ENCODE measurements at regions of chr2 and their contacts with region 1.

Region 1: GRCh38 chr2:62456721-62457539 is 49.1 kb downstream of the TMEM17 start:
- DNase-seq: peak; percentile 60 to 96 (median 78)

Region 2: DNA sequence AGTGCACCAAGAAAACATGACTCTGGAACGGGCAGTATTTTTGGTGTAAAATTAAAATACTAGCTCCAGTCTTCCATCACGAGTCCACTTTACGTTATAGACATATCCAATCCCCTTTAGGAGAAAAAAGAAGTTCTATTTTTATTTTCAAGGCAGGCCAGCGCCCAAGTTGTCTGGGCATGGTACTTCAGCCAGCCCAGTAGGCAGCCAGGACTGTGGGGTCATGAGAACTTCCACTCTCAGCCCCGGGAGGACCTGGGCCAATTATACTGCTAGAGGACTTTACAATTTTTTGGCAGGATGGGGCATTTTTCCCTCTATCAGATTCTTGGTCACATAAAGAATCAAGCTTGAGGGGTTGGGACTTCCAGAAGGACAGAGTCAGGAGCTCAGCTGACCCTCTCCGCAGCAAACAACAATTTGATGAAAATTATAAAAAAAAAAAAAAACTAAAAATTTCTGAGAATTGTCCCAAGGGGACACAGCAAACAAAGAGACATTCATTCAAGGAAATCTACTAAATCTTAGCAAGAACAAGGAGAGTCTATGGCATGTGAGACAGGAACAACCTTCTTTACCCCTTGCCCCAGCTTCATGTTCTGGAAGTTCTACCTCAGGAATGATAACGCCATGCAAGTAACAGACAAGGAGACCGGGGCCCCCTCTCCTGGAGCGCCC is 298.3 kb before region 1 on chr2:
- intact Hi-C with region 1: no loop called
- DNase-seq: no peak

Region 3: GRCh38 chr2:62505750-62506420 is 49.0 kb after region 1 on chr2 and contains the start of gene TMEM17:
- intact Hi-C with region 1: loop called (anchors 5 kb)
- DNase-seq: peak; percentile 85 to 98 (median 89)

Region 4: GRCh38 chr2:62540408-62541168 is 83.7 kb after region 1 on chr2:
- intact Hi-C with region 1: no loop called
- DNase-seq: no peak

Region 5: GRCh38 chr2:62705007-62705829 is 248.3 kb after region 1 on chr2 and contains the start of gene EHBP1:
- intact Hi-C with region 1: loop called (anchors 5 kb)
- DNase-seq: peak; percentile 97 to 100 (median 99)

Region 6: GRCh38 chr2:62724886-62725711 is 268.2 kb after region 1 on chr2:
- intact Hi-C with region 1: loop called (anchors 1 kb)
- DNase-seq: peak; percentile 39 to 96 (median 76)

Region 7: DNA sequence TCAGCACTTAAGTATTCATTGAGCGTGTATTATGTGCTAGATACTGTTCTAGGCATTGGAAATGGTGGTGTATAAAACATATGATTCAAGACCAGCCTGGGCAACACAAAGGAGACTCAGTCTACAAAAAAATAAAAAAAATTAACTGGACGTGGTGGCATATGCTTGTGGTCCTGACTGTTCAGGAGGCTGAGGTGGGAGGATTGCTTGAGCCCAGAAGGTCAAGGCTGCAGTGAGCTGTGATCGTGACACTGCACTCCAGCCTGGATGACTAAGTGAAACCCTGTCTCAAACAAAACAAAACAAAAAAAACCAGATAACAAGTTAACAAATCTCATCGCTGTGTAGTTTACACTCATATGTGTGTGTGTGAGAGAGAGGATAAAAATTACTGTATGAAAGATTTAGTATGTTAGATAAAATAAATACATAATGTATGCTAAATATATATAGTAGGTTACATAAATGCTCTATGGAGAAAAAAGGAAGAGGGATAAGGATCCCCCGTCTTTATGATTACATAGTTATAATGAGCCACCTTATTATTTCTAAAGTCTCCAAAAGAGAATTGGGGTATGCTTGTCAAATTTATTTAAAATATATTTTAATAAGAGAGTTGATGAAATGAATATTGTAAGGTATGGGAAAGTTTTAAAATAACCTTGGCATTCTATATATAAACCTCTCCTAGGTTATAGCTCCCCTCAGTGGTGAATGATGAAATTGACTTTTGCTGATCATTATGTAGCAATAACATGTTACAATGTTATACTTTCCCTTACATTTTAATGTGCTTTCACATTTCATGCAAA is 317.8 kb after region 1 on chr2:
- intact Hi-C with region 1: loop called (anchors 1 kb)
- DNase-seq: peak in 1 of 10 donors; percentile 65

Region 8: DNA sequence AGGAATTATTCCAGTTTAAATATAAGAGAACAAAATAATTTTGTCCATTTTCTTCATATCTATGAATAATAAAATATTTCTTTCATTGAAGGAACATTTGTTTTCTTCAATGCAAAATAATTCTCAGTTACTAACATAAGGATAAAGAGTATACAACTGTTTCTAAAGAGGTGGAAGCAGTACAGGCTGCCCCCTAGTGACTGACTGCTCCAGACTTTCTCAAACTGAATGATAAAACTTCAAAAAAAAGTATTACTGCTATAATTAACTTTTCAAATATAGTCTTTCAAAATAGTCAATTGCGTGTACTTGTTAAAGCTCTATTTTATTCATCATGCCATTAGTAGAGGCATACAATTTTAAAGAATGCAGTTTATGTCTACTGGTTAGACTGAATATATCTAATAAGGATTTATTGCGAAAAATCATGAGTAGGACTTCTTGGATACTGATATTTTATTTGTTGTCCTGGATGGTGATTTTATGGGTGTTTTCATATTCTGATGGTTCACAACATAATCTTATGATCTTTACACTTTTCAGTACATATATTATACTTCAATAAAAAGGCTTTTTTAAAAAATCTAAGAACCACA is 1031.3 kb after region 1 on chr2:
- intact Hi-C with region 1: loop called (anchors 5 kb)
- DNase-seq: peak in 5 of 10 donors; percentile 18 to 58 (median 36)

Measured in posterior cingulate gyrus (tissue), 11 donors.